ENCODE measurements at regions of chr3 and their contacts with region 1.

Region 1: DNA sequence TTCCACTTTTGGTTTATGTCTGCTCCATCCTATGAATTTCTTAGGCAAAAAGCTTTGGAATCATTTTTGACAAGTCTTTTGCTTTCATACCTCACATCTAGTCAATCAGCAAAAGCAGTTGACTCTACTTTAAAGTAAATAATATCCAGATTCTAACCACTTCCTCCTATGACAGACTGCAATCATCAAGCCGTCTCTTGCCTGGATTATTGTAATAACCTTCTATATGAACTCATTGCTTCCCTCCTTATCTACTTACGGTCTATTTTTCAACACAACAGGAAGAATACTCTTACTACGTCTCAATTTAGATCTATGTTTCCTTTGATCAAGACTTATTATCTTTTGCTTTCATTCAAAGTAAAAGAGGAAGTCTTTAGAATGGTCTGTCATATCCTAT is 20.7 kb downstream of the CLDN1 start:
- DNase-seq: no peak
- H3K4me3 ChIP-seq: no peak overlapping the region
- H3K27ac ChIP-seq: no peak overlapping the region
- H3K4me1 ChIP-seq: peaks cover 35% of the 10 kb centered on the region
- H3K27me3 ChIP-seq: no peaks in the 10 kb centered on the region
- CTCF ChIP-seq: no peak

Region 2: DNA sequence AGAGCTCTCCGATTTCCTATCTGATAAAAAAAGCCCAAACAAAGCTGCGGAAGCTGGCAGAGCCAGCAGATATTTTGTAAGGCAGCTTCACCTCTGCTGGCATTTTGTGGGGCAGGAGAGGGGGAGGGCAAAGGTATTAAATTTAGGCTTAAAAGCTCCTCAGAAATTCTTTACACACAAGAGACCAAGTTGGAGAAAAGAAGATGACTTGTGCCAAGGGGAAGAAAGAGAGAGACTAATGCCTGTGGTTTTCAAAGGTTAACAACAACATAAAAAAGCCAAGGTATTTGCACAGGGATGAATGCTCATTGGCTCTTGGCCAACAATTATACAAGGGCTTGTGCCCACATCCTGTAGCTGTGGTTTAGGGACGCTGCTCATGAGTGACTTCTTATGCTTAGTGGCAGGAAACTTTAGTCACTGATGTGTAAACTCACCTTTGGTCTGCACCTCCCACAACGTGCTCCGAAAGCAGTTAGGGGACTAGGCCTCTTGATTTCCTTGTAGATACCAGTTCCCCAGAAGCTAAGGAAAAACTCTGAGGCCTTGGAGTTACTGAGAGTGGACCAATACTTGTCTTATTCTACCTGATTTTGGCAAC is 977.0 kb before region 1 on chr3:
- CTCF ChIA-PET with region 1: no interaction called
- dilution Hi-C with region 1: no loop called
- in situ Hi-C with region 1: no loop called
- intact Hi-C with region 1: no loop called
- DNase-seq: peak; percentile 99
- H3K4me3 ChIP-seq: no peak overlapping the region
- H3K27ac ChIP-seq: peak overlapping the region; percentile 48
- H3K4me1 ChIP-seq: peaks cover 40% of the 10 kb centered on the region
- H3K27me3 ChIP-seq: no peaks in the 10 kb centered on the region
- CTCF ChIP-seq: no peak

Region 3: GRCh38 chr3:190265796-190266195 is 35.8 kb before region 1 on chr3:
- CTCF ChIA-PET with region 1: no interaction called
- dilution Hi-C with region 1: no loop called
- in situ Hi-C with region 1: no loop called
- intact Hi-C with region 1: loop called (anchors 5 kb)
- DNase-seq: peak; percentile 100
- H3K4me3 ChIP-seq: no peak overlapping the region
- H3K27ac ChIP-seq: peak overlapping the region; percentile 75
- H3K4me1 ChIP-seq: peaks cover 31% of the 10 kb centered on the region
- H3K27me3 ChIP-seq: no peaks in the 10 kb centered on the region
- CTCF ChIP-seq: no peak

Measured in mammary epithelial cell (primary cell).